ENCODE measurements at regions of chr10 and their contacts with region 1.

Region 1: DNA sequence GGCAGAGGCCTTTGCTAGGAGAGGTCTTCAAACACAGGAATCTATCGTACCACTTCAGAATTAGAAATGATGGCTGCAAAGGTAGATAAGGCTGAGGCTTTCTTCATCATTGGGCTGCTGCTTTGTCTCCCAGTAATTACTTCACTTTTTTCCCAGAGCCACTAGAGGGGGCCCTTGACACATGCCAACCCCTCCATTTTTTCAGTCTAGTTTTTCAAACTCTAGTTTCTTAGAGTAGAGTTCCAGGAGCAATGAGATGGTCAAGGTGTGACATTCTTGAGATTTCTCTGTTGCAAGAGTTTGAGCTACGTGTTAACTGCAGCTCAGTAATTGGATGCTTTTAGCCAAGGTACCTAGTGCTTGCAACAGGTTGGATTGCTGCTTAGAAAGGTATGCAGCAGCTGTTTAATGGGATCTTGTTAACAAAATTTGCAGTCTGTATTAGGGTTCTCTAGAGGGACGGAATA is 33.8 kb upstream of the RBM20 start:
- DNase-seq: peak; percentile 60
- CTCF ChIP-seq: peak; percentile 74

Region 2: GRCh38 chr10:110285501-110285900 is 324.8 kb before region 1 on chr10:
- in situ Hi-C with region 1: no loop called
- DNase-seq: no peak
- CTCF ChIP-seq: no peak

Region 3: DNA sequence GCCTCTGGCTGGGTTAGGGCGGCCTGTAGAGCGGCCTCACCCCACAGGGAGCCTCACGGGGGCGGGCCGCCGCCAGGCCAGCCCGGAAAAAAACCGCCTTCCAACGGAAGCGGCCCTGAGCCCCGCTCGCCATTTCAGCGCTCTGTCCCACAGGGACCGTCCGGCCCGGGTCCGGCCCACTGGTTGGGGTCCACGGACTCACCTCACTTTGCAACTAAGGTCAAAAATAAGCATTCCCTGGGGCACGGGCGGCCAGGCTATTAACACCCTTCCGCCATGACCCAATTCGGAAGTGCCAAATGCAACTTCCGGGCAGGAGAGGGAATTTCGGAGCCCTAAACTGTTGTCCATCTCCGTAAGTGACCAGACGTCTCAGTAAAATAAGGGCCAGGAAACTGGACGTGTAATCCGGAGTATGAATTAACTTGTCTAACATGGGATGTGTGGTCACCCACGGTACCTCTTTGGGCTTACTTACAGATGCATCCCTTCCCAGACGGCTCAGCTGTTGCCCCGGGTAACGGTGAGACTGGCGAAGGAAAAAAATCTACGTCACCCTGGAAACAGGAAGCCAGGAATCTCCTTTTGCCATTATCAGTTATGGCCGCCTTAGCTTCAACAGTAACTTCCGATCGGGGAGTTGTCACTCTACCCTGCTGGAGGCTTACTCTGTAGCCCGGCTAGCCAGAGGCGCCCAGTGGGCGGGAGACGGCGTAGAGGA is 308.5 kb after region 1 on chr10 and contains the start of gene BBIP1:
- in situ Hi-C with region 1: loop called (anchors 25 kb)
- DNase-seq: peak; percentile 94
- CTCF ChIP-seq: no peak